ENCODE measurements at regions of chr14 and their contacts with region 1.

Region 1: GRCh38 chr14:39232554-39233415 is 930 bp upstream of the MIA2 start:
- DNase-seq: no peak
- H3K4me3 ChIP-seq: no peak overlapping the region
- H3K27ac ChIP-seq: no peak overlapping the region
- H3K4me1 ChIP-seq: no peaks in the 10 kb centered on the region
- H3K27me3 ChIP-seq: no peaks in the 10 kb centered on the region
- CTCF ChIP-seq: no peak

Region 2: DNA sequence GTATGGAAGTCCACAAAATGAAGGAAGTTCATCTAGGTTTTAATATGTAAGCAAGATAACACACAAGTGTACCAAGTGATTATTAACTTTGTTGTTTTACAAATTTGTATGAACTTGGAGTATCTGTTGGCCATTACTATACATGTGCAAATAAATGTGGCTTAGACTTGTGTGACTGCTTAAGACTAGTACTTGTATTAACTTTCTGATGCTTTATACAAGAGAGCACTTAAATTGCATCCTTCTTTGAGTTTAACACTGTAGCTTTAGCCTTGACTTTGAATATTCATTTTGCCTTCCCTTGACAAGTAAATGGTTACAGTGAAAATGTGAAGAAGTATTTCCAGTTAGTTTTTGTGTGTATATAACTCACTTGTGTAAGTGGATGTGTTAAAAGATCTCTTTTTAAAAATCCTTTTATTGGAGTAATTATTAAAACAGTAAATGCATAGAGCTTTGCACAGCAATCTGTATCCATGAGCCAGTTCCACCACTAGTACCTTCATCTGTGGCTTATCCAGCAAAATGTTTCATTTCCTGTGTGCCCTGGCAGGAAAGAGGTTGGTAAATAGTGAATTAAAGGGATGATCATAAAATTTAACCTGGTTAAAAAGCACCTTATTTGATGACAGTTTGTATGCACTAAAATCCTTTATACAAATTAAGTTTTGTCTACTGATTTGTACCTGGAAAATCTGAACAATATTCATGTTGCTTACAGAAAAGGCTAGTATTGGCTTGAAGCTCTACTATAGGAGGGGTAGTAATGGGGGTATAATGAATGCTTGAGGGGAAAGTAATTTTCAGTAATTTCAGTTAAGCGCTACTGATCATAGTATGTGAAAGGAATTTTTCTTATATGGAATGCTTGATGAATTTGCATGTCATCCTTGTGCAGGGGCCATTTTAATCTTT is 49.8 kb before region 1 on chr14:
- CTCF ChIA-PET with region 1: interaction called, 10 read pairs
- POLR2A ChIA-PET with region 1: no interaction called
- intact Hi-C with region 1: no loop called
- DNase-seq: no peak
- H3K4me3 ChIP-seq: no peak overlapping the region
- H3K27ac ChIP-seq: no peak overlapping the region
- H3K4me1 ChIP-seq: 0 out of 2 replicates have a peak, but pooled peaks cover under 1% of the 10 kb centered on the region
- H3K27me3 ChIP-seq: no peaks in the 10 kb centered on the region
- CTCF ChIP-seq: no peak